Naive thymus-derived CD4-positive, alpha-beta T cell (primary cell): ENCODE measurements at regions of chr11 and their contacts with region 1.

Region 1: GRCh38 chr11:4187055-4187988 is 92.7 kb downstream of the RRM1 start:
- DNase-seq: peak; percentile 59 to 95 (median 79)
- ATAC-seq: peak; percentile 95
- H3K4me3 ChIP-seq: peak overlapping the region; percentile 52
- H3K4me3 Mint-ChIP-seq: peak overlapping the region; percentile 67 to 88 (median 77)
- H3K27ac ChIP-seq: no peak overlapping the region
- H3K27ac Mint-ChIP-seq: peak overlapping the region in 1 of 9 donors; percentile 57
- H3K4me1 ChIP-seq: peaks cover 0 to 4% of the 10 kb centered on the region in 2 donors
- H3K4me1 Mint-ChIP-seq: peaks cover 0 to 19% (median 3%) of the 10 kb centered on the region in 7 donors
- H3K27me3 ChIP-seq: no peaks in the 10 kb centered on the region
- H3K27me3 Mint-ChIP-seq: peaks cover 0 to 13% (median 0%) of the 10 kb centered on the region in 5 donors

Region 2: GRCh38 chr11:4134844-4135243 is 52.5 kb before region 1 on chr11:
- CTCF ChIA-PET with region 1: no interaction called
- POLR2A ChIA-PET with region 1: no interaction called
- intact Hi-C with region 1: no loop called
- DNase-seq: no peak
- ATAC-seq: no peak
- H3K4me3 ChIP-seq: no peak overlapping the region
- H3K4me3 Mint-ChIP-seq: no peak overlapping the region
- H3K27ac ChIP-seq: no peak overlapping the region
- H3K27ac Mint-ChIP-seq: no peak overlapping the region
- H3K4me1 ChIP-seq: no peaks in the 10 kb centered on the region
- H3K4me1 Mint-ChIP-seq: peaks cover 0 to 9% (median 0%) of the 10 kb centered on the region in 7 donors
- H3K27me3 ChIP-seq: no peaks in the 10 kb centered on the region
- H3K27me3 Mint-ChIP-seq: no peaks in the 10 kb centered on the region

Region 3: GRCh38 chr11:4393209-4393857 is 206.0 kb after region 1 on chr11 and contains the start of gene TRIM21:
- CTCF ChIA-PET with region 1: no interaction called
- POLR2A ChIA-PET with region 1: no interaction called
- intact Hi-C with region 1: loop called in 1 of 2 experiments (anchors 5 kb)
- DNase-seq: peak; percentile 62 to 92 (median 87)
- ATAC-seq: peak; percentile 100
- H3K4me3 ChIP-seq: peak within 1 kb of the TSS; percentile 87
- H3K4me3 Mint-ChIP-seq: peak within 1 kb of the TSS; percentile 88 to 94 (median 90)
- H3K27ac ChIP-seq: peak within 1 kb of the TSS; percentile 89
- H3K27ac Mint-ChIP-seq: peak within 1 kb of the TSS; percentile 68 to 96 (median 93)
- H3K4me1 ChIP-seq: peaks cover 8 to 14% of the 10 kb centered on the region in 2 donors
- H3K4me1 Mint-ChIP-seq: peaks cover 47 to 61% (median 58%) of the 10 kb centered on the region in 7 donors
- H3K27me3 ChIP-seq: no peaks in the 10 kb centered on the region
- H3K27me3 Mint-ChIP-seq: peaks cover 0 to 8% (median 5%) of the 10 kb centered on the region in 5 donors
- total RNA-seq, gene TRIM21: 17.5 to 78.9 (median 29.7) TPM

Region 4: DNA sequence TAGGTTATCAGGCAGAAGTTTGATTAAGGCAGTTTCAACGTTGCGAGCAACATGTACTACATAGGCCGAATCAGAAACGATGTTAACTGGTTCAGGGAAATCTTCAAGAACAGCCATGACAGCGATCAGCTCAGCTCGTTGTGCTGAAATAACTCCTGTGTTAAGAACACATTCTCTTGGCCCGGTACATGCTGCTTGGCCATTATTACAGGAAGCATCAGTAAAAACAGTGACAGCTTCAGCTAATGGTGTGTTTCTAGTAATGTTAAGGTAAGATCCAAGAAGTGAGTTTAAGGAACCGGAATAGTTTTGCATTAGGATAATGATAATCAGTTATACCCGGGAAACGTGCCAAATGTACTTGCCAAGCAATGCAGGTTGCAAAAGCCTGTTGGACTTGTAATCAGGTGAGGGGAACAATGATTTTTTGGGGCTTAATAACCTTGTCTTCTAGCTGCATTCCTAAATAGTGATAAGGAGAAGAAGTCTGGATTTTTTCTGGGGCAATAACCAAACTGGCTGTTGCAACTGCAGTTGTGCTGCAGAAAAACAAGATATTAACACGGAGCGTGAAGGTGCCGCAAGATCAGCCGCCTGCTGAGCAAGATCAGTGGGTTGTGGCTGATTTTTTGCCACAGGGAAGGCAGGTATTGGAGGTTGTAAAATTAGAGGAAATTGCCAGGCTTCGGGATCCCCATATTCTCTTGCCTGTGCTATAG is 309.4 kb after region 1 on chr11:
- CTCF ChIA-PET with region 1: interaction called, 55 read pairs
- POLR2A ChIA-PET with region 1: no interaction called
- intact Hi-C with region 1: loop called (anchors 1 kb)
- DNase-seq: no peak
- ATAC-seq: no peak
- H3K4me3 ChIP-seq: no peak overlapping the region
- H3K4me3 Mint-ChIP-seq: no peak overlapping the region
- H3K27ac ChIP-seq: no peak overlapping the region
- H3K27ac Mint-ChIP-seq: no peak overlapping the region
- H3K4me1 ChIP-seq: no peaks in the 10 kb centered on the region
- H3K4me1 Mint-ChIP-seq: peaks cover 0 to 7% (median 0%) of the 10 kb centered on the region in 7 donors
- H3K27me3 ChIP-seq: no peaks in the 10 kb centered on the region
- H3K27me3 Mint-ChIP-seq: peaks cover 3 to 16% (median 13%) of the 10 kb centered on the region in 5 donors

Region 5: GRCh38 chr11:4551346-4551979 is 364.1 kb after region 1 on chr11:
- CTCF ChIA-PET with region 1: interaction called, 3 read pairs
- POLR2A ChIA-PET with region 1: no interaction called
- intact Hi-C with region 1: loop called in 1 of 2 experiments (anchors 1 kb)
- DNase-seq: no peak
- ATAC-seq: no peak
- H3K4me3 ChIP-seq: no peak overlapping the region
- H3K4me3 Mint-ChIP-seq: no peak overlapping the region
- H3K27ac ChIP-seq: no peak overlapping the region
- H3K27ac Mint-ChIP-seq: no peak overlapping the region
- H3K4me1 ChIP-seq: no peaks in the 10 kb centered on the region
- H3K4me1 Mint-ChIP-seq: no peaks in the 10 kb centered on the region
- H3K27me3 ChIP-seq: peaks cover 0 to 2% of the 10 kb centered on the region in 2 donors
- H3K27me3 Mint-ChIP-seq: peaks cover 0 to 39% (median 35%) of the 10 kb centered on the region in 5 donors

Region 6: DNA sequence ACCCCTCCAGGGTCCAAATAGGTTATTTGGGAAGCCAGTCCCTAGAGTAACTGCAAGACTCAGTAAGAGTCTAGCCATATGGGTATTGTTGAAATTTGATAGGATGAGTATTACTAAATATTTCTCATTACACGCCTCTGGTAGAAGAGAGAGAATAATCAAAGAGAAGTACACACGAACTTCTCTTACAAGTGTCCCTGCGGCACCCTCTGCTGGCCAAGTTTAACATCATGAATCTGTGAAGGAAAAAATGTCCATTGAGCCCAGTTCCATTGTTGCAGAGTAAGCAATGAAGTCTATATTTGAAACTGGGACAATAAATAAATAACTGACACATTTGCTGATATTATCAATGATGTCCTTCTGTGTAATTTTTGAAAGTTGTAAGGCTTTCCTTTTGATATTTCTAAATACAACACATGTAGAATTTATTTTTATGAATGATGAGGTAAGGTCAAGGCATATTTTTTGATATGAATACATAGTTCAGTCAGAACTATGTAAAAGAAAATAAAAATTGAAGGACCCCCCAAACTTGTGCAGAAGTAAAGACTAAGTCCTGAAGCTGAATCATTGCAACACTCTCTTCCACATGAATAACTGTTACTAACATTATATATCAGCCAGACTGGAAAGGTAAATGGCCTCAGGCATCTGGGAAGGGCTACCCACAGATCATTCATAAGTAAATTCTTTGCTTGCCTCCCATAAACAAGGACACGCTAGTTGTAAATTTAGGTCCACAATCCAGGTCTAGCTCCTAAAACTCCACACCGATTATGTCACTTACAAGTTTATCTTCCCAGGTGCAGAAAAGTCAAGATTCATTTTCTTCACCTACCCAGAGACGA is 817.3 kb after region 1 on chr11:
- CTCF ChIA-PET with region 1: no interaction called
- POLR2A ChIA-PET with region 1: no interaction called
- intact Hi-C with region 1: loop called in 1 of 2 experiments (anchors 1 kb)
- DNase-seq: no peak
- ATAC-seq: no peak
- H3K4me3 ChIP-seq: no peak overlapping the region
- H3K4me3 Mint-ChIP-seq: no peak overlapping the region
- H3K27ac ChIP-seq: no peak overlapping the region
- H3K27ac Mint-ChIP-seq: peak overlapping the region in 1 of 9 donors; percentile 21
- H3K4me1 ChIP-seq: no peaks in the 10 kb centered on the region
- H3K4me1 Mint-ChIP-seq: no peaks in the 10 kb centered on the region
- H3K27me3 ChIP-seq: no peaks in the 10 kb centered on the region
- H3K27me3 Mint-ChIP-seq: peaks cover 0 to 22% (median 10%) of the 10 kb centered on the region in 5 donors

Region 7: GRCh38 chr11:5808500-5809121 is 1621.3 kb after region 1 on chr11 and contains the start of gene OR52N2:
- CTCF ChIA-PET with region 1: interaction called, 3 read pairs
- POLR2A ChIA-PET with region 1: no interaction called
- intact Hi-C with region 1: loop called in 1 of 2 experiments (anchors 1 kb)
- DNase-seq: peak; percentile 38 to 73 (median 66)
- ATAC-seq: peak; percentile 92
- H3K4me3 ChIP-seq: peak within 1 kb of the TSS; percentile 61
- H3K4me3 Mint-ChIP-seq: peak within 1 kb of the TSS; percentile 86 to 95 (median 90)
- H3K27ac ChIP-seq: no peak within 1 kb of the TSS
- H3K27ac Mint-ChIP-seq: peak within 1 kb of the TSS in 8 of 9 donors; percentile 1 to 87 (median 20)
- H3K4me1 ChIP-seq: no peaks in the 10 kb centered on the region
- H3K4me1 Mint-ChIP-seq: peaks cover 7 to 16% (median 10%) of the 10 kb centered on the region in 7 donors
- H3K27me3 ChIP-seq: peaks cover 0 to 6% of the 10 kb centered on the region in 2 donors
- H3K27me3 Mint-ChIP-seq: peaks cover 12 to 29% (median 25%) of the 10 kb centered on the region in 5 donors
- total RNA-seq, gene OR52N2: not detected